ENCODE measurements at regions of chr3 and their contacts with region 1.

Region 1: DNA sequence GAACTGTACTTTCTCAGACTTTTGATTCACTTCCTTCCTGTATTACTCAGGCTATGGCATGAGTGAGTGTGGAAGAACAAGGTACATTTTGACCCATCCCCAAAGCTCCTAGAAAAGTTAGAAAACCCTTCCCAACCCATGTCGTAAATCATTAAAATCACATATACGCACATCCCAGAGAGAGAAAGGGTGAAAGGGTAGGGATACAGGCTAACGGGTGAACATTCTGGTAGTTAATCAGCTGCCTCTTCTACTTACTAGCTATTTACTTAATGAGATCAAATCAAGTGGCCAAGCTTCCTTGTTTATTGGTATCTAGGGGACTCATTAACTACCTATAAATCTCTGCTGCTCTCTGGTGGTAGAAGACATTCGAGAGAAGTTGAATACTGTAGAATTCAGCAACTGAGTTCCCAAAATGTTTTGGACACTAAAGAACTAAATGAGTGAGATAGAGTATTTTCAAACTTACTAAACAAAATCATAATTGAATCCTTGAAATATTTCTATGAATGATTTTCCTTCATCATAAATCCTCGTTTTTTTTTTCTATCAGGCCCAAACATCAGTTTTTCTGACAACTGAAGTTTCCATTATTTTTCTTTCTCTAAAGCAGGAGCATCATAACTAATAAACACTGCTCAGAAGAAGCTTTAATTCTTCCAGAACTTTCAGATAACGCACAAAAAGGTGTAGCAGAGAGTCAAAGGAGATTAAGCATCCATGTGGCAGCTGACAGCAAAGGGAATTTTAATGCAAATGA is 124.2 kb downstream of the IMPG2 start:
- DNase-seq: no peak
- H3K4me3 ChIP-seq: no peak overlapping the region
- H3K27ac ChIP-seq: no peak overlapping the region
- H3K27me3 ChIP-seq: no peaks in the 10 kb centered on the region
- CTCF ChIP-seq: peak; percentile 76

Region 2: GRCh38 chr3:100603469-100603868 is 592.7 kb before region 1 on chr3:
- CTCF ChIA-PET with region 1: interaction called, 10 read pairs
- POLR2A ChIA-PET with region 1: no interaction called
- DNase-seq: no peak
- H3K4me3 ChIP-seq: no peak overlapping the region
- H3K27ac ChIP-seq: peak overlapping the region; percentile 21
- H3K27me3 ChIP-seq: peaks cover 2% of the 10 kb centered on the region
- CTCF ChIP-seq: peak; percentile 68

Region 3: GRCh38 chr3:100737334-100737733 is 458.8 kb before region 1 on chr3:
- CTCF ChIA-PET with region 1: interaction called, 13 read pairs
- POLR2A ChIA-PET with region 1: no interaction called
- DNase-seq: no peak
- H3K4me3 ChIP-seq: no peak overlapping the region
- H3K27ac ChIP-seq: no peak overlapping the region
- H3K27me3 ChIP-seq: no peaks in the 10 kb centered on the region
- CTCF ChIP-seq: peak; percentile 53

Region 4: GRCh38 chr3:100743535-100743934 is 452.6 kb before region 1 on chr3:
- CTCF ChIA-PET with region 1: interaction called, 11 read pairs
- POLR2A ChIA-PET with region 1: no interaction called
- DNase-seq: no peak
- H3K4me3 ChIP-seq: no peak overlapping the region
- H3K27ac ChIP-seq: no peak overlapping the region
- H3K27me3 ChIP-seq: no peaks in the 10 kb centered on the region
- CTCF ChIP-seq: no peak

Region 5: DNA sequence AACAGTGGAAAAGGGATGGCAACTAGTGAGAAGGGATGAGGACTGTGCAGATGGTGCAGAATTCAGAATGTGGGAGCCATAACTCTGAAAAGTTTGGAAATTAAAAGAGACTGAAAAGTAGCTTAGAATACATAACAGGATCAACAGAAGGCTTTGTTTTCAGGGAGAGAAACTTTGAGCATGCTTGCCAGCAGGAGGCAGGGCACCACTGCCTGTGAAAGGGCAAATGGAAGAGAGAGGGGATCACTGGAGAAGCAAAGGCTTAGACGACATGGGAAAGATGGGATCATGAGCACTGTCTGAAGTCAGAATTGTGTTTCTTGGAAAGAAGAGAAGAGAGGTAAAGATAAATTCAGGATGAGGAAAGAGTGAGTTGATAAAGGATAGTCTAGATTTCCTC is 302.5 kb before region 1 on chr3:
- CTCF ChIA-PET with region 1: interaction called, 153 read pairs
- POLR2A ChIA-PET with region 1: no interaction called
- DNase-seq: no peak
- H3K4me3 ChIP-seq: no peak overlapping the region
- H3K27ac ChIP-seq: no peak overlapping the region
- H3K27me3 ChIP-seq: no peaks in the 10 kb centered on the region
- CTCF ChIP-seq: peak; percentile 88

Region 6: DNA sequence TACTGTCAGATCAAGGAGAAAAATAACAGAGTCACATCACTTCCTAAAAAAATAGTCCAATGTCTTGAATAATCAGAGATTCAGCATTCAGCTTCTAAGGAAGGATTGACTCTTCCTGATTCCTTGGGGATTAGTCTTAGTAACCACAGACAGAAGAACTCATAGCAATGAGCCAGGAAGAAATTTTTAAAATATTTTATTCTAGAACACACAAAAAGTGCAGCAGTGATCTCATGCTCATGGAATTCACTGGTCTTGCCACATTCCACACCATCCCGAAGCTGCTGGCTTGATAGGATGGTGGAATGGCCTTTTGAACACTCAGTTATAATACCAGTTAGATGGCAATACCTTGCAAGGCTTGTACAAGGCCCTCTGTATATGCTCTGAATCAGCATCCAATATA is 159.9 kb before region 1 on chr3:
- CTCF ChIA-PET with region 1: no interaction called
- POLR2A ChIA-PET with region 1: no interaction called
- DNase-seq: peak; percentile 88
- H3K4me3 ChIP-seq: no peak overlapping the region
- H3K27ac ChIP-seq: peak overlapping the region; percentile 63
- H3K27me3 ChIP-seq: no peaks in the 10 kb centered on the region
- CTCF ChIP-seq: no peak

Region 7: DNA sequence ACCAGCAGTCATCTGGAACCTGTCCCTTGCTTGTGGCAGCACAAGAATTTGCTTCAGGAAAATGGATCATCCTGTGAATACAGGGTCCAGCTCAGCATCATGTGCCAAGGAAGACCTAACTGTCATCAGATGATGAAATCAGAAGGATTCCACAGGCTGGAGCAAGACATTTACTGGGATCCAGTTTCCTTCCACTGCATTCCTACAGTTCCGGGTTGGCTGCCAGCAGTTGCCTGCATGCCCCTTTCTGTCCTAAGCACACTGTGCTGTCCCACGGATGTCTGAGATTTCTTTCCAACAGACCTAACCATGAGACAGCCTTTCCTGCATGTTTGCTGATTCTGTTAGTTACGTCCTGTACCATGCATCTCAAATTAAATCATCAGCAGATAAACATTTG is 16.5 kb before region 1 on chr3:
- CTCF ChIA-PET with region 1: interaction called, 24 read pairs
- POLR2A ChIA-PET with region 1: no interaction called
- DNase-seq: no peak
- H3K4me3 ChIP-seq: no peak overlapping the region
- H3K27ac ChIP-seq: no peak overlapping the region
- H3K27me3 ChIP-seq: no peaks in the 10 kb centered on the region
- CTCF ChIP-seq: no peak

Measured in AG04450 (cell line).